ENCODE measurements at regions of chr2 and their contacts with region 1.

Region 1: DNA sequence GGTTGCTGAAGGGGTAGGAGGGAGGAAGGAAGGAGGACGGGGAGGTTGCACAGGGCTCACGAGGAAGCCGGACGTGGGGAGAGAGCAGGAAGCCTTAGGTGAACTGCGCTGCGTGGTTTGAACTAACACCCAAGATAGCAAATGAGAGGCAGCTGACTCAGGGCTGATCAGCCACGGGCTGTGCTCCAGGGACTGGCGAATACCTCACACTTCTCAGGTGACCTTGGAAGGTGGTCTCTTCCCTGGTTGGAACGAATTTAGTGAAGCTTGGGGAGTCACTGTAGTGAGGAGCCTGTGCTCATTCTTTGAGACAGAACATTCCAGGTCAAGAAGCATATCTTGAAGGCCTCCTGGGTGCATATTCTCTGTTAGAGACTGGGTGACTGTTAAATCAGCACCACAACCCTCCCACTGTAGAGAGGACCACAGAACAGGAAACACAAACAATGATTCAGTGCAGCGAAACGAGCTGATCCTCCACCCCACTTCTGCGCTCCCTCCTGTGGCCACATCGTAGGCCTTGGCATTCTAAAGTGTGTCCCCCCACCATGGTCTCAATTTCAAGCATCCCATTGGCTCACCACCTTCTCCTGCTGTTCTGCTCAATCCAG is 33.8 kb downstream of the TOGARAM2 start:
- DNase-seq: peak; percentile 90
- H3K4me3 Mint-ChIP-seq: peak overlapping the region; percentile 93
- H3K27ac Mint-ChIP-seq: peak overlapping the region; percentile 99
- H3K4me1 Mint-ChIP-seq: peaks cover 64% of the 10 kb centered on the region
- H3K27me3 Mint-ChIP-seq: no peaks in the 10 kb centered on the region

Region 2: GRCh38 chr2:28870146-28870891 is 144.6 kb before region 1 on chr2 and contains the start of gene TRMT61B:
- intact Hi-C with region 1: loop called (anchors 1 kb)
- DNase-seq: peak; percentile 100
- H3K4me3 Mint-ChIP-seq: peak within 1 kb of the TSS; percentile 94
- H3K27ac Mint-ChIP-seq: peak within 1 kb of the TSS; percentile 97
- H3K4me1 Mint-ChIP-seq: peaks cover 20% of the 10 kb centered on the region
- H3K27me3 Mint-ChIP-seq: peaks cover 9% of the 10 kb centered on the region
- total RNA-seq, gene TRMT61B: 18.9 and 20.1 TPM in 2 replicates

Region 3: DNA sequence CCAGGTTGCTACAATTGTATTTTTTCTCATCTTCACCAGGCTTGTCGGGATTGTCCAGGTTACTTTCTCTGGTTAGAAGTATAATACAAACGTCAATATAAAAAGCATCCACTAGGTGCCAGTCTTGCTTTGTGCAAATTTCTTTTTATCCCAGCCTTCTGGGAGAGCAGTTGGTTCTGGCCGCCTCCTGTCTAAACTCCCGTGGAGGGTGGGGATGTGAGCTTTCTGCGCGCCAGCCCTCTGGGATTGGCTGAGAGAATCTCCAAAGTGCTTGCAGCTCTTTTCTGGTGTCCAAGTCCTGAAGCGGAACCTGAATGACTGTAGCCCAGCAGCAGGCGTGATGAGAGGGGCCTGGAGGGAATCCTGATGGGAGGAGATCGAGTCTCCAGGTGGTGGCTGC is 56.2 kb before region 1 on chr2:
- intact Hi-C with region 1: loop called (anchors 2 kb)
- DNase-seq: peak; percentile 86
- H3K4me3 Mint-ChIP-seq: no peak overlapping the region
- H3K27ac Mint-ChIP-seq: no peak overlapping the region
- H3K4me1 Mint-ChIP-seq: peaks cover 12% of the 10 kb centered on the region
- H3K27me3 Mint-ChIP-seq: peaks cover 7% of the 10 kb centered on the region

Region 4: GRCh38 chr2:29024882-29025430 is 10.0 kb after region 1 on chr2:
- intact Hi-C with region 1: no loop called
- DNase-seq: no peak
- H3K4me3 Mint-ChIP-seq: no peak overlapping the region
- H3K27ac Mint-ChIP-seq: no peak overlapping the region
- H3K4me1 Mint-ChIP-seq: peaks cover under 1% of the 10 kb centered on the region
- H3K27me3 Mint-ChIP-seq: no peaks in the 10 kb centered on the region

Region 5: DNA sequence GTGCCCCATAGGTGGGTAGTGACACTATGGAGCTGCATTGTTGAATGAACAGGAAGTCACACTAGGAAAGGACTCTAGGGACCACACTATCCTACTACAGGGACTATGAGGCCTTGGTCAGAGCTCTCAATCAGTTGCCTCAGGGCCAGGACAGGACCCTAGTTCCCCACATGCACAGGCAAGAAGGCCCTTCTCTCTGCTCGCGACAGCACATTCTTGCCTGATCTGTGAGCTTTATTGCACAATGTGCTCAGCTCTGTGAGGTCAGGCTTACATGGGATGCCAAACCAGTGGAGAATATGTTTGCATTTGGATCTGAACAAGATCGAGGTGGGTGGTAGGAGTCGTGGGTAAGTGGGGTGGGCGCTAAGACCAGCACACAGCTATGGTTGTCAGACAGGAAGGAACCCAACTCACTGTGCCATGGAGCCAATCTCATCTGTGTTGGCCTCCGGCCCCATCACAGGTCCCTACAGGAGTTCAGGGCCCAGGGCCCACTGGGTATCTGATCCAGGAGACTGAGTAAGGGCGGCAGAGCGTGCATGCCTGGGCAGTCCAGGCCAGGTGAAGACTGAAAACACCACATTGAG is 51.5 kb after region 1 on chr2:
- intact Hi-C with region 1: no loop called
- DNase-seq: no peak
- H3K4me3 Mint-ChIP-seq: no peak overlapping the region
- H3K27ac Mint-ChIP-seq: no peak overlapping the region
- H3K4me1 Mint-ChIP-seq: peaks cover 3% of the 10 kb centered on the region
- H3K27me3 Mint-ChIP-seq: no peaks in the 10 kb centered on the region

Region 6: GRCh38 chr2:29115797-29116781 is 101.2 kb after region 1 on chr2:
- intact Hi-C with region 1: loop called (anchors 1 kb)
- DNase-seq: peak; percentile 93
- H3K4me3 Mint-ChIP-seq: peak overlapping the region; percentile 85
- H3K27ac Mint-ChIP-seq: peak overlapping the region; percentile 91
- H3K4me1 Mint-ChIP-seq: peaks cover 43% of the 10 kb centered on the region
- H3K27me3 Mint-ChIP-seq: peaks cover 5% of the 10 kb centered on the region

Measured in activated CD4-positive, alpha-beta T cell treated with anti-CD3 and anti-CD28 coated beads, Interleukin-2, amount 10 ng/mL, durations not matched to agents 24 days and 14 days (primary cell).